Activated T-helper 1 cell treated with anti-CD3 and anti-CD28 coated beads, Interleukin-12 subunit alpha, Interleukin-12 subunit beta, Interleukin-2, Interleukin-4 antibody, amounts not matched to agents 30 ng/mL and 10 ng/mL and 1 ng/mL, durations not matched to agents 14 hours and 24 hours and 36 hours (primary cell): ENCODE measurements at regions of chr5 and their contacts with region 1.

Region 1: DNA sequence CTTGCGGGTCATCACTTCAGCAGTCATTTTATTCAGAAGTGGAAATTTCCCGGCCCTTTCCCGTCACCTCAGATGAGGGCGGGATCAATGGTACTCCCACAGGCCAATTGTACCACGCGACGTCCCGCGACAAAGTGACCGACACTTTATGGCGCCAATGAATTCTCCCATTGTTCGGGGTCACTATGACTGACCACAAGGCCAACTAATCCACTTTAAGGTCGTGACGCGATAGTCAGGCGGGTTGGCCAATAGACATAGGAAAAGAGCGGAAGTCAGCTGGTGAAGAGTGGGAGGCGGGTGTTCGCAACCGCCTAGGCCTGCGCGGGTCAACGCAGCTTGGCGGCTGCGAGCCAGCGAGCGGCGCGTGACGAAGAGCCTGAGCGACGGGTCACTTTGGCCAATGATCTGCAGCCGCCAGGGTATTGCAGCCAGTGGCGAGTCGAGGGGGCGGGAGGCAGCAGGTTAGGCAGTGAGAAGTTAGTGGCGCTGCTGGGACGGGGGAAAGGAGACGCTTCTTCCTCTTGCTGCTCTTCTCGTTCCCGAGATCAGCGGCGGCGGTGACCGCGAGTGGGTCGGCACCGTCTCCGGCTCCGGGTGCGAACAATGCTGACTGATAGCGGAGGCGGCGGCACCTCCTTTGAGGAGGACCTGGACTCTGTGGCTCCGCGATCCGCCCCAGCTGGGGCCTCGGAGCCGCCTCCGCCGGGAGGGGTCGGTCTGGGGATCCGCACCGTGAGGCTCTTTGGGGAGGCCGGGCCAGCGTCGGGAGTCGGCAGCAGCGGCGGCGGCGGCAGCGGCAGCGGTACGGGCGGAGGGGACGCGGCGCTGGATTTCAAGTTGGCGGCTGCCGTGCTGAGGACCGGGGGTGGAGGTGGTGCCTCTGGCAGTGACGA is at the start of gene ANKHD1:
- DNase-seq: peak; percentile 96
- H3K4me3 Mint-ChIP-seq: no peak within 1 kb of the TSS
- H3K27ac Mint-ChIP-seq: peak within 1 kb of the TSS; percentile 88
- H3K4me1 Mint-ChIP-seq: peaks cover 24% of the 10 kb centered on the region
- H3K27me3 Mint-ChIP-seq: no peaks in the 10 kb centered on the region
- total RNA-seq, gene ANKHD1: 121 and 123 TPM in 2 replicates

Region 2: GRCh38 chr5:140174465-140175366 is 226.9 kb before region 1 on chr5 and contains the start of gene CYSTM1:
- intact Hi-C with region 1: loop called (anchors 1 kb)
- DNase-seq: peak; percentile 95
- H3K4me3 Mint-ChIP-seq: peak within 1 kb of the TSS; percentile 94
- H3K27ac Mint-ChIP-seq: peak within 1 kb of the TSS; percentile 92
- H3K4me1 Mint-ChIP-seq: peaks cover 18% of the 10 kb centered on the region
- H3K27me3 Mint-ChIP-seq: peaks cover 19% of the 10 kb centered on the region
- total RNA-seq, gene CYSTM1: 16.6 and 17.2 TPM in 2 replicates

Region 3: GRCh38 chr5:140381972-140382371 is 19.6 kb before region 1 on chr5:
- intact Hi-C with region 1: loop called (anchors 1 kb)
- DNase-seq: no peak
- H3K4me3 Mint-ChIP-seq: no peak overlapping the region
- H3K27ac Mint-ChIP-seq: no peak overlapping the region
- H3K4me1 Mint-ChIP-seq: peaks cover 15% of the 10 kb centered on the region
- H3K27me3 Mint-ChIP-seq: no peaks in the 10 kb centered on the region

Region 4: DNA sequence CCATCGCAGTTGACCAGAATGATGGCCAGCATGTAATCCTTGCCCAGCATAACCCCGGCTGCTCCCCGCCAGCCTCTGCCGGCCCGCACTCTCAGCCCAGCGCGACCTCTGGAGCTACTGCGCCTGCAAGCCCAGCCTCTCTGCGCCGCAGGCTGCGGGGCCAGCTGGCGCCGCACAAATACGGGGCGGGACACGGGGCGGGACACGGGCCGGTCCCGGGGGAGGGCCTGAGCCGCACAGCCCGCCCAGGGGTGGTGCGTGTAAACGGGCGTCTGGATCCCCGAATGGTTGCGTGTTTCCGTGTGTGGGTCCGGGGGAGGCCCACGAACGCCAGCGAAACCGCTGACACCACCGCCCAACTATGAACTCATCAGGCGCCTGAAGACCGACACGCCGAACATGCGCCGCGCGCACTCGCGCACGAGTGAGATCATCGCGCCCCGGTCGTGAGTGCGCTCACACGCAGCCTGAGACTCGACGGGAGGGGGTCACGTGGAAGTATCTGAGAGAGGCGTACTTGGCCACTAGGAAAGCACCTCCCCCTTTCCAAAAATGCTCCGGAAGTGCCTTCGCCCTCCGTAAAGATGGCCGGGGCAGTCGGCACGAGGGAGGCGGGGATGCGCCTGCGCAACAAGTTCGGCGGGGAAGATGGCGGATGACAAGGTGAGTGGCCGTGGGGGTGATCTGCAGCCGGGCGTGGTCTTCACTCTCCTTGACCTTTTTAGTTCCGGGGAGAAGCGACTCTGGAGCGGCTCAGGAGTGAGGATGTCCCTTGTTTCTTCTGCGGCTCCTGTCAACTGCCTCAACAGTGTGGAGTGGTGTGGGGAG is 162.8 kb after region 1 on chr5 and contains the starts of genes APBB3 and SLC35A4:
- intact Hi-C with region 1: loop called (anchors 1 kb)
- DNase-seq: peak; percentile 98
- H3K4me3 Mint-ChIP-seq: peak within 1 kb of the TSS; percentile 95
- H3K27ac Mint-ChIP-seq: peak within 1 kb of the TSS; percentile 96
- H3K4me1 Mint-ChIP-seq: peaks cover 54% of the 10 kb centered on the region
- H3K27me3 Mint-ChIP-seq: no peaks in the 10 kb centered on the region
- total RNA-seq, gene APBB3: 17.2 and 21.2 TPM in 2 replicates
- total RNA-seq, gene SLC35A4: 94.3 and 107 TPM in 2 replicates

Region 5: DNA sequence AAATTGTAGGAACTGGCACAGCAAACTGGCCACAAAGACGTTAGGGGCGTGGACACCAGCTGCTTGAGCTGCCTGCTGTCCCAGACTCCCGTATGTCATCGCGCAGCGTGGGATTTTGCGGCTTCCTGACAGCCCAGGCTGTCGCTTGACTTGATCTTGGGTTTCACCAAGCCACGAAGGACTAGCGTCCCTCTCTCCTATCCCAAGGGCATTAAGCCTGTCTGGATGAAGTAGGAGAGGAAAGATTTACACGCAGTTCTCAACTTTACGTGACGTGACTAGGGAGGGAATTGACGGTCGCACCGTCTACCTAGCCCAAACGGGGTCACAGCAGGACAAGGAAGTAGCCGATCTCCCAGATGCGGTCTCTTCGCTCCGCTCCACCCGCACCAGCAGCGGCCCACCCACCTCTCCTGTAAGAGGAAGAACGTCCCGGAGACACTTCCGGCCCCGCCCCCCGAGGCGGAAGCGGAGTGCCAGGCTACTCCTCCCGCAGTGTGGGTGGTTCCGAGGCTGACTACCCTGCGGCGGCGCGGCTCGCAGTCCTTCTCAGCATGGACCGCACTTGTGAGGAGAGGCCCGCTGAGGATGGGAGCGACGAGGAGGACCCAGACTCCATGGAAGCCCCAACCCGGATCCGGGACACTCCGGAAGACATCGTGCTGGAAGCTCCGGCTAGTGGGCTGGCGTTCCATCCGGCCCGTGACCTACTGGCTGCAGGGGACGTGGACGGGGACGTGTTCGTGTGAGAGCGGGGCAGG is 262.9 kb after region 1 on chr5 and contains the start of gene WDR55:
- intact Hi-C with region 1: loop called (anchors 1 kb)
- DNase-seq: peak; percentile 94
- H3K4me3 Mint-ChIP-seq: peak within 1 kb of the TSS; percentile 100
- H3K27ac Mint-ChIP-seq: peak within 1 kb of the TSS; percentile 93
- H3K4me1 Mint-ChIP-seq: peaks cover 28% of the 10 kb centered on the region
- H3K27me3 Mint-ChIP-seq: no peaks in the 10 kb centered on the region
- total RNA-seq, gene WDR55: 42.7 and 43.2 TPM in 2 replicates

Region 6: GRCh38 chr5:141320225-141321169 is 918.9 kb after region 1 on chr5 and contains the start of gene TAF7:
- intact Hi-C with region 1: loop called (anchors 2 kb)
- DNase-seq: peak; percentile 91
- H3K4me3 Mint-ChIP-seq: peak within 1 kb of the TSS; percentile 94
- H3K27ac Mint-ChIP-seq: peak within 1 kb of the TSS; percentile 98
- H3K4me1 Mint-ChIP-seq: peaks cover 31% of the 10 kb centered on the region
- H3K27me3 Mint-ChIP-seq: no peaks in the 10 kb centered on the region
- total RNA-seq, gene TAF7: 71.6 and 73.7 TPM in 2 replicates